MCF 10A (cell line): ENCODE measurements at regions of chr12 and their contacts with region 1.

Region 1: DNA sequence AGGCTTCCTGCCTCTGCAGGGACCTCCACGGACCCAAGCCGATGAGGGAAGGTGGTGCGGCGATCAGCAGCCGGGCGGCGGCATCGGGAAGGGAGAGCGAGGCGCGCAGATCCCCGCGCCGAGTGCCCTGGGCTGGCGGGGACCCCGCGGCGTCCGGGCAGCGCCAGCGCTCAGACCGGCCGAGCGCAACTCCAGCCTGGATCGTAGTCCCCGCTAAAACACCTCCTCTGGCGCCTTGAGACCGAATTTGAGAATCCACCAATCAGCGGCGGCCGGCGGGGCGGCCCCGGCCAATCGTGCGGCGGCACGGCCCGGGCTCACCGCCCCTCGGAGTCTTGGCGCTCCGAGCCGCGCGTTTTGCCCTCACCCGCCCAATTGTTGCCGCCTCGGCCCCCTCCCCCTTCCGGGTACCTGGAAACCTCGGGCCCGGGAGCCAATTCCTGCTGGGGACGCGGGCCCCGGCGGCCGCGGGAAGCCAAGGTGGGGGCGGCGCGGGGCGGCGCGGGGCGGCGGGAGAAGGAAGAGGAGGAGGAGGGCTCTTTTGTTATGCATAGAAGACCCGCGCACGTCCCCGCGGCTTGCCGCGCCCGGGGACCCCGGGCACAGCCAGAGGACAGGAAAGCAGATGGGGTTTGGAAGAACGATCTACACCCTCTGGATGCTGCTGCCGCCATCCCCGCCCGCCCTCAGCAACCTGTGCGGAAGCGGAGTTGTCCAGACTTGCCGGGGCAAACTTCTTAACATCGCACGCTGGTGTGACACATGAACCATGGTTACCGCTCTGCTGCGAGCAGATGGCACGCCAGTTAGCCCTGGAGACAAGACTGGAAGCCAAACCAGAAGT is at the start of gene E2F7:
- DNase-seq: peak; percentile 94
- H3K4me3 Mint-ChIP-seq: peak within 1 kb of the TSS; percentile 69
- H3K27ac Mint-ChIP-seq: peak within 1 kb of the TSS; percentile 77
- H3K4me1 Mint-ChIP-seq: peaks cover 37% of the 10 kb centered on the region
- H3K27me3 Mint-ChIP-seq: no peaks in the 10 kb centered on the region
- CTCF ChIP-seq: no peak
- total RNA-seq, gene E2F7: 23.5 and 34.4 TPM in 2 replicates

Region 2: DNA sequence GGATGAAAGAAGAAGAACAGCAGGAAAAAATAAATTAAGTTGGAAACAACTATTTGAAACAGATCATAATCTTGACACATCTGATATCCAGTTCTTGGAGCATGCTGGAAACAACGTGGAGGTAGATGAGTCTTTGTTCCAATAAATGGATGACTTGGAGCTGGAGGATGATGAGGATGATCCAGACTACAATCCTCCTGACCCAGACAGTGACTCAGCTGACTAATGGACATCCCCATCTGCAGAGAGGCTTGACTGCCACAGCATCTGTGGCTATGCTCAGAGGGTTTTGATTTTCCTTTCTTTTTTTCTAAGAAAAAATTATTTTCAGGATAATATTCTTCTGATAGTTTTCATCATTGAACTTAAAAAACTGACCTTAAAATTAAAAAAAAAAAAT is 307.9 kb before region 1 on chr12:
- CTCF ChIA-PET with region 1: no interaction called
- POLR2A ChIA-PET with region 1: no interaction called
- intact Hi-C with region 1: no loop called
- DNase-seq: no peak
- H3K4me3 Mint-ChIP-seq: no peak overlapping the region
- H3K27ac Mint-ChIP-seq: no peak overlapping the region
- H3K4me1 Mint-ChIP-seq: no peaks in the 10 kb centered on the region
- H3K27me3 Mint-ChIP-seq: no peaks in the 10 kb centered on the region
- CTCF ChIP-seq: no peak

Region 3: DNA sequence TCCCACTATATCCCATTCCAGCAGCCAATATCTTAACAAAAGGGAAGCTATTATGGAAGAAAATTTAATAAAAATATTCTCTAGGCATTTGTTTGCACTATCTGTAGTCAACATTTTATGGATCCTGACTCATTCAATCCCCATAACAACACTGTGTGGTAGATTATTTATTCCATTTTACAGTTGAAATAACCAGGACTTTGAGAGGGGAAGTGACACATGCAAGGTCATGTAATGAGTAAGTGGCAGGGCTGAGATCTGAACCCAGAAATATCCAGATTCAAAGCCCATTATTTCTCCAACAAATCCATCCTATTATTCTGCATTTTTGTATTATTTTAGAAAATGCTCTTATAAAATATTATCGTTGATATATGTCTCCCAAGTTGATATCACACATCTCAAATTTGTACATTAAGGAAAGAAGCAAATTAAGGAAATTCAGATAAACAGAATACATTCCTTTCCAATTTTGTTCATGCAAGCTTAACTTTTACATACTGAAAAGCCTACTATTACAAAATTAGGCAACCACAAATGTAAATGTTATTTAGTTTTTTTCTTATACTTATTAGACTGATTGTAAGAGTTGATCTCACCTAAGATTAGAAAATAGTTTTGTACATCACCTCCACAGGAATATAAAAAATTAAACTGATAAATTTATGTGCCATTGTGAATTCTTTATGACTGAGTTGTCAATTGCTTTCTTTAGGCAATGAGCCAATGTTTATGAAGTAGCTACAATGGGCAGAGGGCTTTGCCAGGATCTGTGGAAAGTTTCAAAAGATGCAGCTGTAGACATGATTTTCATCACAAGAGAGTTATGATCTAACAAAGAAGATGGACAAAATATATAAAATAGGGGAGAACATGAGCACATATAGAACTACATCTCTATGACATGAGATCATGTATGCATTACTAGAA is 54.8 kb after region 1 on chr12:
- CTCF ChIA-PET with region 1: no interaction called
- POLR2A ChIA-PET with region 1: interaction called, 5 read pairs
- intact Hi-C with region 1: loop called (anchors 1 kb)
- DNase-seq: peak; percentile 71
- H3K4me3 Mint-ChIP-seq: no peak overlapping the region
- H3K27ac Mint-ChIP-seq: no peak overlapping the region
- H3K4me1 Mint-ChIP-seq: peaks cover 22% of the 10 kb centered on the region
- H3K27me3 Mint-ChIP-seq: no peaks in the 10 kb centered on the region
- CTCF ChIP-seq: no peak

Region 4: DNA sequence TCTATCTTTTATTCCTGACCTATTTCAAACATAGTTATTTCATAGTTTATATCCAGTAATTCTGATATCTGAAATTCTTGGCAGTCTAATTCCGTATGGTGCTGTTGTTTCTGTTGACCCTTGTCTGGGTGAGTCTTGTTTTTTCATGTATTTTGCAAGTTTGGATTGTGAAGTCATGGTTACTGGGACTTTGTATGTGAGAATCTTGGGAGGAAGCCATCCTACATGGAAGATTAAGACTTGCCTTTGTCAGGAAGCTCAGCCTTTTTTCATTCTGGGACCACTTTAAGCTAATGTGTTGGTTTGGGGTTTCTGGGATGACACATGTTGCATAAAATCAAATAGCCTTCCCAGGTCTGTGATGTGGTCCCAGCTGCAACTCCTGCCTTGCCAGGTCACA is 191.4 kb after region 1 on chr12:
- CTCF ChIA-PET with region 1: no interaction called
- POLR2A ChIA-PET with region 1: no interaction called
- intact Hi-C with region 1: no loop called
- DNase-seq: no peak
- H3K4me3 Mint-ChIP-seq: no peak overlapping the region
- H3K27ac Mint-ChIP-seq: no peak overlapping the region
- H3K4me1 Mint-ChIP-seq: peaks cover 5% of the 10 kb centered on the region
- H3K27me3 Mint-ChIP-seq: no peaks in the 10 kb centered on the region
- CTCF ChIP-seq: no peak

Region 5: DNA sequence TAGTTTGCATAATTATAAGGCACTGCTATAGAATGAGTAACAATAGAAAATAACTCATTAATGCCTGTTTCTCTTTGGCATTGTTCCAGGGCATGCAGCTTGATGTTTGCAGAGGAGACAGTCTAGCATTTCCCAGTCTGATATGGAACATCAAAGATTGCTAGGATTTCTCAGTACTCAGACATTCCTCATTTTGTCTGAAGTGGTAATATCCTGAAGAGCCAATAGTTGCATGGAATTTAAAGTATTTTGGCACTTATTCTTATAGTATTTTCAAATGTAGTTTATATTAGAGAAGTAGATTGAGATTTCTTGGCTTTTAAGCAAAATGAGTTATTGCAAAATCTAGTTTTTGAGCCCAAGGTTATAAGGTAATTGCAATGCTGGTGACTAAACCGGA is 337.1 kb after region 1 on chr12:
- CTCF ChIA-PET with region 1: no interaction called
- POLR2A ChIA-PET with region 1: no interaction called
- intact Hi-C with region 1: no loop called
- DNase-seq: peak; percentile 55
- H3K4me3 Mint-ChIP-seq: no peak overlapping the region
- H3K27ac Mint-ChIP-seq: no peak overlapping the region
- H3K4me1 Mint-ChIP-seq: no peaks in the 10 kb centered on the region
- H3K27me3 Mint-ChIP-seq: no peaks in the 10 kb centered on the region
- CTCF ChIP-seq: no peak